ENCODE measurements at regions of chr3 and their contacts with region 1.

Region 1: GRCh38 chr3:170811928-170812591 is 57.9 kb downstream of the RPL22L1 start:
- DNase-seq: peak; percentile 77
- H3K4me3 ChIP-seq: no peak overlapping the region
- H3K27ac ChIP-seq: peak overlapping the region; percentile 48
- H3K4me1 ChIP-seq: peaks cover 37% of the 10 kb centered on the region
- H3K27me3 ChIP-seq: no peaks in the 10 kb centered on the region
- CTCF ChIP-seq: peak; percentile 87 to 98

Region 2: GRCh38 chr3:170317954-170318353 is 494.1 kb before region 1 on chr3:
- CTCF ChIA-PET with region 1: interaction called, 11 read pairs
- dilution Hi-C with region 1: no loop called
- in situ Hi-C with region 1: loop called in 1 of 2 experiments (anchors 5 kb)
- intact Hi-C with region 1: no loop called
- DNase-seq: no peak
- H3K4me3 ChIP-seq: no peak overlapping the region
- H3K27ac ChIP-seq: no peak overlapping the region
- H3K4me1 ChIP-seq: no peaks in the 10 kb centered on the region
- H3K27me3 ChIP-seq: no peaks in the 10 kb centered on the region
- CTCF ChIP-seq: no peak

Region 3: DNA sequence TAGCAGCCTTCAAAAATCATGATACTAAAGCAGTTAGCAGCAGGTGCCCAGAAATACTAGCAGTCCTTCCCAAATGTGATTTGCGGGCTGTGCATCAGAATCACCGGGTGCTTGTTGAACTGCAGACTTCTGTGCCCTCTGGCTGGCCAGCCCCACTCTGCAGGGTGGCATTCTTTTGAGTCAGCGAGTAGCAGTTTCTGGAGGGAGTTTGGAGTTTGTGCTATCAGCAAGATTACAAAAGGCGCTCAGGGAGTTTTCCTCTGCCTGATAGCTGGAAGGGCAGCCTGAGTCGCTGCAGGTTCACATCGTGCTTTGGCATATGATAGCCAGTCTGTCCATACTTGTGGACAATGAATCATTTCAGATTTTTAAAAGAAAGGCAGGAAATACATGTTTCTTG is 335.8 kb before region 1 on chr3:
- CTCF ChIA-PET with region 1: no interaction called
- dilution Hi-C with region 1: no loop called
- in situ Hi-C with region 1: no loop called
- intact Hi-C with region 1: loop called (anchors 5 kb)
- DNase-seq: peak; percentile 39
- H3K4me3 ChIP-seq: no peak overlapping the region
- H3K27ac ChIP-seq: no peak overlapping the region
- H3K4me1 ChIP-seq: peaks cover 14% of the 10 kb centered on the region
- H3K27me3 ChIP-seq: no peaks in the 10 kb centered on the region
- CTCF ChIP-seq: no peak

Region 4: GRCh38 chr3:170614214-170614966 is 197.7 kb before region 1 on chr3:
- CTCF ChIA-PET with region 1: interaction called, 3 read pairs
- dilution Hi-C with region 1: no loop called
- in situ Hi-C with region 1: no loop called
- intact Hi-C with region 1: loop called (anchors 2 kb)
- DNase-seq: peak; percentile 90
- H3K4me3 ChIP-seq: no peak overlapping the region
- H3K27ac ChIP-seq: peak overlapping the region; percentile 9
- H3K4me1 ChIP-seq: peaks cover 9% of the 10 kb centered on the region
- H3K27me3 ChIP-seq: no peaks in the 10 kb centered on the region
- CTCF ChIP-seq: no peak

Region 5: DNA sequence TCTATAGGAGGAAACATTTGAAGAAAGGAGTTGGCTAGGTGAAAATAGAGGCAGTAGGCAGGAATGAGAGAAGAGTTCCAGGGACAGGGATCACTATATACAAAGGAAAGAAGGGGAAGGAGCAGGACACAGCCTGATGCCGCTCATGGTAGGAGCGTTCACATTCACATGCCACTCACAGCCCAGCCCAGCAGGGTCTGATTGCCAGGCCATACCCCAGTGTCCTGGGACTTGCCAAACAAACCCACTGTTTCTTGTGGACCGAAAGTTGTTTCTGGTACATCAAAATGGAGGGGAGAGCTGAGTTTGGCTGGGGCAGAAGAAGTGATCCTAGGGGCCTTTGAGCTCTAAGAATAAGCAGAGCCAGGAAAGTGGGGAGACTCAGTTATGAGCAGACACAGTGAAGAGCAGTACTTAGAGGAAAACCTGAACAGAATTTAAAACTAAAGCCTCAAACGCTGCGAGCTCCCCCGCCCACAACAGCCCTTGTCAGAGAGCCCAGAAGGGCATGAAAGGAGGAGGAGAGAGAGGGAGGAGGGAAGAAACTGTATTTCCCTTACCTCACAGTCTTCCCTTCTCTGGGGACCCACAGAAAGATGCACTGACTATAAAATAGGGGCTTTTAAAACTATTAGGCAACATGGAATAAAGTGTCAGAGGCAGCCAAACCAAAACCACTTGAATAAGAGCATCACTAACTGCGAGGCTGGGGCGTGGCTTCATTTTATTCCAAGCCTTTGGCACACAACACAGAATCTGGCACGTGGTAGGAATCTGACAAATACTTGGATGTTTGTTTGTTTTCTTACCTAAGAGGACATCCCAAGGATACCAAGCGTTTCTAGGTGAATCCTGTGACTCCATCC is 71.1 kb before region 1 on chr3:
- CTCF ChIA-PET with region 1: no interaction called
- dilution Hi-C with region 1: no loop called
- in situ Hi-C with region 1: no loop called
- intact Hi-C with region 1: loop called (anchors 2 kb)
- DNase-seq: peak; percentile 73
- H3K4me3 ChIP-seq: no peak overlapping the region
- H3K27ac ChIP-seq: peak overlapping the region; percentile 79
- H3K4me1 ChIP-seq: peaks cover 44% of the 10 kb centered on the region
- H3K27me3 ChIP-seq: no peaks in the 10 kb centered on the region
- CTCF ChIP-seq: no peak

Region 6: DNA sequence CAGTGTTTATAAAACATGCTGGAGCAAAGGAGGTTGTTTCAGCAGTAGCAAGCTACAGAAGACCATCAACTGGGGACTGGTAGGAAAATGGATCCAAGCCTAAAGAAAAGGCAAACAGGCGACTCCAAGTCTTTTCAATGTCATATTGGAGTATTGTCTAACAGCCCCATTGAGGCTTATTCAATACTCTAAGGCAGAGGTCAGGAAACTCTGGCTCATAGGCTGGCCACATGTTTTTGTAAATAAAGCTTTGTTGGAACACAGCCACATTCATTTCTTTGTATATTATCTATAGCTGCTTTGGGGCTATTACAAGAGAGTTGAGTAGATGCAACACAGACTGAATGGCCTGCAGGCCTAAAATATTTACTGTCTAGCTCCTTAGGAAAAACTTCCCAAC is 19.6 kb before region 1 on chr3:
- CTCF ChIA-PET with region 1: no interaction called
- dilution Hi-C with region 1: no loop called
- in situ Hi-C with region 1: no loop called
- intact Hi-C with region 1: no loop called
- DNase-seq: no peak
- H3K4me3 ChIP-seq: no peak overlapping the region
- H3K27ac ChIP-seq: no peak overlapping the region
- H3K4me1 ChIP-seq: no peaks in the 10 kb centered on the region
- H3K27me3 ChIP-seq: no peaks in the 10 kb centered on the region
- CTCF ChIP-seq: no peak

Region 7: GRCh38 chr3:172244011-172244410 is 1432.0 kb after region 1 on chr3:
- CTCF ChIA-PET with region 1: no interaction called
- dilution Hi-C with region 1: no loop called
- in situ Hi-C with region 1: no loop called
- intact Hi-C with region 1: no loop called
- DNase-seq: peak; percentile 91
- H3K4me3 ChIP-seq: no peak overlapping the region
- H3K27ac ChIP-seq: peak overlapping the region; percentile 87
- H3K4me1 ChIP-seq: peaks cover 52% of the 10 kb centered on the region
- H3K27me3 ChIP-seq: no peaks in the 10 kb centered on the region
- CTCF ChIP-seq: no peak

Measured in mammary epithelial cell (primary cell).